ENCODE measurements at regions of chr15 and their contacts with region 1.

Region 1: DNA sequence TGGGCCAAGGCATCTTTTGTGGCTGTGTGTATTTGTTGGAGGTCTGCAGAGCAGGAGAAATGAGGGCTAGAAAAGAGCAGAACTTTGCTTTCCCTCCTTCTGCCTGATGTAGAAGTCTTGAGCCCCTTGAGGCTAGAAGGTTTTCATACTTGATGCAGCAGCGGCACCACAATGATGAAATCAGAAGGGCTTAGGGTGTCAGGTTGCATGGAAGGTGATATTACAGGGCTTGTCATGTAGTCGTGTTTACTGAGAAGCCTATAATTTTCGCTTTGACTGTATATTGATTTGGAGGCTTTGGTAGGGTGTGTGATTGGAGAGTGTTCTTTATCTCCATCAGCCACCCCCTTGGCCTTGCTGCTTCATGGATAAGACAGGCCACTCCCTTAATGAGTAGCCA is 339.8 kb downstream of the THSD4 start:
- DNase-seq: no peak
- H3K4me3 ChIP-seq: no peak overlapping the region
- H3K27ac ChIP-seq: no peak overlapping the region
- H3K4me1 ChIP-seq: no peaks in the 10 kb centered on the region
- H3K27me3 ChIP-seq: no peaks in the 10 kb centered on the region

Region 2: DNA sequence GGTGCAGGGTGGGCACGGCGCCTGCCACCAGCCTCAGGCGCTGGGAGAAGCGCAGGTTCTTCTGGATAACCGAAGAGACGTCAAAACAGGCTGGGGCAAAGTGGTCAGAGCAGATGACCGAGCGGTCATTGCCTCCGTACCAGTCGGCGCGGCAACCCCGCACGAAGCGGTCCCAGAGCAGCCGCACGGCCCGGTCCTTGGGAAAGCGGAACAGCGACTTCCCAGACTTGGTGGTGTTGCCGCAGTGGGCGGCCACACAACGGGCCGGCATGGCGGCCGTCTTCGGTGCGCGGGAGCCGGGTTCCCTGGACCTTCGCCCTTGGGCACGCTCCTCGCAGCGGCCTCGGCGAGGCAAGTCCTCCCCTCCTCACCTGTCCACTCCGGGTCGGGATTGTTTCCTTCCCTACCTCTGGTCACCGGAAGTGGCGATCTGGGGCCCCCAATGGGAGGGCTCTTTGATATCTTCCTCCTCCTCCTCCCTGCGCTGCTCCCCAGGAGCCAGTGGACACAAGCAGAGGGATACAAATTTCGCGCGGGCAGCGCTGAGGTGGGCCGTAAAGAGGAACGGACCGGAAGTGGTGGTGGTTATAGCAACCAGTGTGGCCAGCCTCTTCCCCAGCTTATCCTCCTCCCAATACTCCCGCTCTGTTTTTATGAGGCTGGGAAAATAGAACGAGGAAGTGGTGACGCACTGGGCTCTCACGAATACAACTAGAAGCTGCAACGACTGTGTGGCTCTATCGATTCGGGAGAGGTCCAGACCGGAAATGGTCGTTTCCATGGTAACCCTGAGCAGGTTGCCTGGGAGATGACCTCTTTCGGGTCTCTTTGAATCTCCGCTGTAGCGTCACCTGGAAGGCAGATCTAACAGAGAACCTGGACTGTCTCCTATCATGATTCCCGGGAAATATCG is 562.8 kb before region 1 on chr15 and contains the starts of genes LRRC49 and THAP10:
- in situ Hi-C with region 1: no loop called
- DNase-seq: peak; percentile 96
- H3K4me3 ChIP-seq: peak within 1 kb of the TSS; percentile 92
- H3K27ac ChIP-seq: peak within 1 kb of the TSS; percentile 83
- H3K4me1 ChIP-seq: peaks cover 17% of the 10 kb centered on the region
- H3K27me3 ChIP-seq: no peaks in the 10 kb centered on the region
- total RNA-seq, gene LRRC49: 10.3 and 11.1 TPM in 2 replicates
- total RNA-seq, gene THAP10: 2.0 and 6.4 TPM in 2 replicates

Region 3: GRCh38 chr15:71651750-71652186 is 196.7 kb after region 1 on chr15:
- in situ Hi-C with region 1: loop called (anchors 10 kb)
- DNase-seq: peak; percentile 72
- H3K4me3 ChIP-seq: no peak overlapping the region
- H3K27ac ChIP-seq: no peak overlapping the region
- H3K4me1 ChIP-seq: peaks cover 28% of the 10 kb centered on the region
- H3K27me3 ChIP-seq: no peaks in the 10 kb centered on the region

Region 4: DNA sequence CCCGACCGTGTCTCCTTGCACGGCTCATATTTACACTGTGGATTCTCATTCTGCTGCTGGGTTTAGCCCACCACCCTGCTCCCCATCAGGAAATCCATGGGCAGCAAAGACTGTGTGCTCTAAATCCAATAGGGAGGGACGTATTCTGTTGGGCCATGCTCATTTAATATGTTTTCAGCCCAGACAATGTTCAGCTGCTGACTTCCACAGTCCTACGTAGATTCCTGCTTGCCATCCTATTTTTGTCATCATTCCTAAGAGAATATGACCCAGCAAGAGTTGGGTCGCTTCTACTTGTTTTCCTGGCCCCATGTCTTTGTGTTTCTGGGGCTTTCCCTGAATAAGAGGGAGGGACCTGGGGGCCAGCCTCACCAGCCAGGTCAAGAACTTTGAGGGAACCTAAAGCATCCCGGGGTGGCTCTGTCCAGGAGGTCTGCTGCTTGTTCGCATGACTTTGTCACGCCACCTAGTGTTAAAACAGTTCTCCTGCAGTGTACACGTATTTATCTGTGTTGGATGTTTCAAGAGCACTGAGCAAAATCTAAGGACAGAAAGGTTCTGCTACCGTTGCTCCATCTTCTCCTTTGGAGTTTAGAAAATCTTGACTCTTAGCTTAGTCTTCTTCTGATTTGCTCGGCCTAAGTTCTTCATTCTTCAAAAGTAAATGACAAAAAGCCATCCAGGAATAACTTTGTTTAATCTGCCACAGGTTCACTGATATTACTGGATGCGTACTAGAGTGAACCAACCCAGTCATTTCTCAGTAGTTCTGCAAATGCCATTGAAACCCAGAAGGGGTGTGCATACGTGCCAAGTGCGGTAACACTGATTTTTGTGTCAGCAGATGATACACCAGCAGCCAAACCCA is 275.4 kb after region 1 on chr15:
- in situ Hi-C with region 1: loop called (anchors 10 kb)
- DNase-seq: peak; percentile 74
- H3K4me3 ChIP-seq: no peak overlapping the region
- H3K27ac ChIP-seq: no peak overlapping the region
- H3K4me1 ChIP-seq: peaks cover 3% of the 10 kb centered on the region; the same call in 1 of the 2 replicates
- H3K27me3 ChIP-seq: no peaks in the 10 kb centered on the region